Ovary (tissue), 10 donors: ENCODE measurements at regions of chr3 and their contacts with region 1.

Region 1: GRCh38 chr3:197674741-197675562 is 61.8 kb downstream of the RUBCN start:
- DNase-seq: no peak
- H3K4me3 ChIP-seq: no peak overlapping the region
- H3K27ac ChIP-seq: no peak overlapping the region
- H3K4me1 ChIP-seq: no peaks in the 10 kb centered on the region
- H3K27me3 ChIP-seq: no peaks in the 10 kb centered on the region
- CTCF ChIP-seq: no peak
- EP300 ChIP-seq: no peak
- POLR2A ChIP-seq: no peak

Region 2: GRCh38 chr3:197599089-197599765 is 75.7 kb before region 1 on chr3:
- intact Hi-C with region 1: loop called in 1 of 4 experiments (anchors 10 kb)
- DNase-seq: peak; percentile 76 to 79 (median 77)
- H3K4me3 ChIP-seq: no peak overlapping the region
- H3K27ac ChIP-seq: no peak overlapping the region
- H3K4me1 ChIP-seq: peaks cover 10% of the 10 kb centered on the region
- H3K27me3 ChIP-seq: no peaks in the 10 kb centered on the region
- CTCF ChIP-seq: peak; percentile 73 to 80 (median 78)
- EP300 ChIP-seq: no peak
- POLR2A ChIP-seq: no peak